ENCODE measurements at regions of chr3 and their contacts with region 1.

Region 1: GRCh38 chr3:190646996-190647395 is 133.1 kb downstream of the IL1RAP start:
- DNase-seq: no peak
- H3K4me3 ChIP-seq: no peak overlapping the region
- H3K27ac ChIP-seq: no peak overlapping the region
- H3K4me1 ChIP-seq: no peaks in the 10 kb centered on the region
- H3K27me3 ChIP-seq: no peaks in the 10 kb centered on the region
- CTCF ChIP-seq: no peak
- POLR2A ChIP-seq: no peak

Region 2: GRCh38 chr3:190690246-190690645 is 43.2 kb after region 1 on chr3:
- intact Hi-C with region 1: loop called in 1 of 2 experiments (anchors 2 kb)
- DNase-seq: no peak
- H3K4me3 ChIP-seq: no peak overlapping the region
- H3K27ac ChIP-seq: no peak overlapping the region
- H3K4me1 ChIP-seq: no peaks in the 10 kb centered on the region
- H3K27me3 ChIP-seq: no peaks in the 10 kb centered on the region
- CTCF ChIP-seq: no peak
- POLR2A ChIP-seq: no peak

Region 3: DNA sequence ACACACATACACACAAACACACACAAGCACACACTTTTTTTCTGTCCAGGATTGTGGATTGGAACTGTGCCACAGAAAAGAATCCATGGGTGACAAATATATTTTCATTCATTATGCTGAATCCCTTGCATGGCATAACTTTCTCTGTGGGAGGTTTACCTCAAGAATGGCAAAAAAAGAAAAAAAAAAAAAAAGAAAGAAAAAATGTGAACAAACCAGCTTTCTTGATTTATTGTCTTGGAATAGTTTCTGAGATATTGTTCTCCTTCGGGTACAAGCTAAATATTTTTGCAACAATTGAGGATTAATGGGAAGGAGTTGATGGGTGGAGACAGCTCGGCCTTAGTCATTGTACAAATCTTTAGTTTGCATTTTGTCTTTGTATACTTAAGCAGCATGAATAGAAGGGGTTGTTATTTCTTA is 62.4 kb after region 1 on chr3:
- intact Hi-C with region 1: no loop called
- DNase-seq: no peak
- H3K4me3 ChIP-seq: no peak overlapping the region
- H3K27ac ChIP-seq: no peak overlapping the region
- H3K4me1 ChIP-seq: no peaks in the 10 kb centered on the region
- H3K27me3 ChIP-seq: no peaks in the 10 kb centered on the region
- CTCF ChIP-seq: no peak
- POLR2A ChIP-seq: no peak

Measured in adrenal gland (tissue), 19 donors.